PC-3 (cell line): ENCODE measurements at regions of chr1 and their contacts with region 1.

Region 1: DNA sequence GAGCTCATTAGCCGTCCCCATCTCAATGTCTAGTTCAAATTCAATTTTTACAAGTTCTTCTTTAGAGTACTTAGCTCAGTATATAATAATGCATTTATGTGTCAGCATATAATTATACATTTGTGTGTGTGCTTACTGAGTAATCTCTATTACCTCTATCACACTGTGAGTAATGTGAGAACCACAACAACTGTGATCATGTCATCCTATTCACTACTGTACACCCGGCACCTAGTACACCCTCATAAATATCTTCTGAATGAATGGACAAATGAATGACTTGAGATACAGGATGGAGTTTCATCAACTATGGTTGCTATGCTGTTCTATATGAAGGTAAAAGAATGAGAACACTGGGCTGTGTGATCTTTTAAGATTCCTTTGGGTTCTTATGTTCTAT is 124.0 kb downstream of the GPATCH2 start:
- DNase-seq: peak; percentile 96
- ATAC-seq: peak; percentile 99
- H3K4me3 ChIP-seq: no peak overlapping the region
- H3K27ac ChIP-seq: peak overlapping the region; percentile 68
- H3K4me1 ChIP-seq: peaks cover 24% of the 10 kb centered on the region
- H3K27me3 ChIP-seq: no peaks in the 10 kb centered on the region
- CTCF ChIP-seq: no peak

Region 2: DNA sequence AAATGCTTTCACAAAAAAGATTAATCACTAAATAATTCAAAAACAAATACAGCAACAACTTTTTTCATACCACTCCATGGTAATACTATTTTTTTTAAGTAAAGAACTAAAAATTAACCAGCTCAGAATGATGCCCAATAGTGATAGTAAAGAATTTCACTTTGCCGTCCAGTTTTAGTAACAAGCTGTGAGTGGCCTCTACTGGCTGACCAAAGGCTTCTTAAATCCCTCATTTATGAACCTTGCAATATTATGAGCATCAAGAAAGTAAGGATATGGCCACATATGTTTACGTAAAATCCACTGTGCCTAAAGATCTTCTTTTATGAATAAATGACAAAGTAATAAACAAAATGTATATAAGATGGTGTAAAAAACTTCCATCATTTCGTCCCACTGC is 15.4 kb after region 1 on chr1:
- CTCF ChIA-PET with region 1: no interaction called
- POLR2A ChIA-PET with region 1: no interaction called
- intact Hi-C with region 1: loop called (anchors 1 kb)
- DNase-seq: peak; percentile 32
- ATAC-seq: peak; percentile 37; the same call in 1 of the 2 replicates
- H3K4me3 ChIP-seq: no peak overlapping the region
- H3K27ac ChIP-seq: no peak overlapping the region
- H3K4me1 ChIP-seq: peaks cover 35% of the 10 kb centered on the region
- H3K27me3 ChIP-seq: no peaks in the 10 kb centered on the region
- CTCF ChIP-seq: peak; percentile 64

Region 3: DNA sequence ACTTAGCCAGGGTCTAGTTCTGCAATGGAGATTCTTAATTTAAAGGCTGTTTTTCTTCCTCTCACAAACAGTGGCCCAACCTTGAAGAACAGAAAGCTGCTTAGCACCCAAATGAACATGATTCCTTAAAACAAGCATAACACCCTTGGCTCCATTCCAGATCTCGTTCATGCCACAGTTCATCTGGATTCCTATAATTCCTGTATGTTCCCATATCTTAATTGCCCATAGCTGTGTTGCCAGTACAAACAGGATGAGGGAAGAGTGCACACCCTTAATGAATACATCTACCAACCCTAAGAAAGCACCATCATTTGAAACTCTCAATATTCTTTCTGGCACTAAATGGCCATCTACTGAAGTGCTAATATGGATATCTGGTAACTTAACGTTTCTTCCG is 883.7 kb after region 1 on chr1:
- CTCF ChIA-PET with region 1: interaction called, 11 read pairs
- POLR2A ChIA-PET with region 1: no interaction called
- intact Hi-C with region 1: no loop called
- DNase-seq: peak; percentile 72
- ATAC-seq: peak; percentile 67
- H3K4me3 ChIP-seq: no peak overlapping the region
- H3K27ac ChIP-seq: no peak overlapping the region
- H3K4me1 ChIP-seq: peaks cover 15% of the 10 kb centered on the region
- H3K27me3 ChIP-seq: no peaks in the 10 kb centered on the region
- CTCF ChIP-seq: no peak